CD4-positive, alpha-beta T cell (primary cell): ENCODE measurements at regions of chr1 and their contacts with region 1.

Region 1: GRCh38 chr1:233295237-233295974 is at the start of gene PCNX2:
- DNase-seq: peak; percentile 28 to 87 (median 62)
- ATAC-seq: peak; percentile 79
- H3K4me3 ChIP-seq: peak within 1 kb of the TSS; percentile 65
- H3K4me3 Mint-ChIP-seq: peak within 1 kb of the TSS; percentile 89
- H3K27ac ChIP-seq: peak within 1 kb of the TSS; percentile 36 to 60
- H3K27ac Mint-ChIP-seq: peak within 1 kb of the TSS; percentile 79
- H3K4me1 ChIP-seq: peaks cover 12% of the 10 kb centered on the region
- H3K4me1 Mint-ChIP-seq: peaks cover 36% of the 10 kb centered on the region
- H3K27me3 ChIP-seq: no peaks in the 10 kb centered on the region
- H3K27me3 Mint-ChIP-seq: no peaks in the 10 kb centered on the region
- CTCF ChIP-seq: no peak
- total RNA-seq, gene PCNX2: 46.4 to 49.4 TPM

Region 2: GRCh38 chr1:233281711-233282581 is 13.5 kb before region 1 on chr1:
- CTCF ChIA-PET with region 1: interaction called, 5 read pairs
- POLR2A ChIA-PET with region 1: interaction called, 4 read pairs
- intact Hi-C with region 1: loop called in 1 of 2 experiments (anchors 2 kb)
- DNase-seq: peak in 8 of 14 experiments; percentile 6 to 62 (median 31)
- ATAC-seq: peak; percentile 82
- H3K4me3 ChIP-seq: no peak overlapping the region
- H3K4me3 Mint-ChIP-seq: peak overlapping the region; percentile 43
- H3K27ac ChIP-seq: peak overlapping the region in 1 of 2 donors; percentile 25
- H3K27ac Mint-ChIP-seq: peak overlapping the region; percentile 75
- H3K4me1 ChIP-seq: peaks cover 22% of the 10 kb centered on the region
- H3K4me1 Mint-ChIP-seq: peaks cover 54% of the 10 kb centered on the region
- H3K27me3 ChIP-seq: no peaks in the 10 kb centered on the region
- H3K27me3 Mint-ChIP-seq: no peaks in the 10 kb centered on the region
- CTCF ChIP-seq: no peak

Region 3: DNA sequence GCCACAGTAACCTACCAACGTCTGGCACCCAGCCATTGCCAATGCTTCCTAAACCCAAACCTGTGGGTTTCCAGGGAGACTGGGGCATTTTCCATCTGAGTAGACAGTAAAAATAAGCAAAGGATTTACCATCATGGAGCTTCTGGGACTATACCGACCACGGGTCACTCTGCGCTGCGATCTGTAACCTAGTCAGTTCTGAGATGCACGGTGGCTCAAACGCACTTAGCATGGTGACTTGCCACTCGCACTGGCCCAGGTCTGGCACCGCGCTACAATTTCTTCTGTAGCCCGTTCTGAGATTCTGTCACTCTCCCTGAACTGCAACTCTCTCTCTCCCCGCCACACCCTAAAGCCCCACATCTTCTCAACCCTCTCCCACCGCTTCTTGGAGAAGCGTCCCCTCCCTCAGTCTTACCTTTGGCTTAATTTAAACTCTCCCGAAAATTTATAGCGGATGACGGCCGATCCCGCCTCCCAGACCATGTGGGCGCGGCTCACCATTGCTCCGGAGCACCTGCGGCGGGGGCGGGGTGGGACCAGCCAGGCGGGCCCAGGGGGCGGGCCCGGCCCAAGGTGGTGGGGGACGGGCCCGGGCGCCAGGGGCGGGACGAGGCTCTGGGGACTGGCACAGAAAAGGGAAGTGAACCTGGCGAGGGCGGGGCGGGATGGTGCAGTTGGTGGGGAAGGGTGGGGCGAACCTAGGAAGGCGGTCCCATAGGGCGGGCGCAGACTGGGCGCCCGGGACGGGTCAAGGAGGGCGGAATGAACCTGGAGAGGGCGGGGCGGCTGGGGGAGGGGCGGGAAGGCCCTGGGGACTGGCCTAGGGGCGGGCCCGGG is 31.6 kb after region 1 on chr1:
- CTCF ChIA-PET with region 1: interaction called, 3 read pairs
- POLR2A ChIA-PET with region 1: interaction called, 8 read pairs
- intact Hi-C with region 1: loop called (anchors 2 kb)
- DNase-seq: peak; percentile 72 to 98 (median 85)
- ATAC-seq: peak; percentile 92
- H3K4me3 ChIP-seq: peak overlapping the region; percentile 49
- H3K4me3 Mint-ChIP-seq: peak overlapping the region; percentile 94
- H3K27ac ChIP-seq: peak overlapping the region in 1 of 2 donors; percentile 30
- H3K27ac Mint-ChIP-seq: peak overlapping the region; percentile 77
- H3K4me1 ChIP-seq: peaks cover 13% of the 10 kb centered on the region
- H3K4me1 Mint-ChIP-seq: peaks cover 11% of the 10 kb centered on the region
- H3K27me3 ChIP-seq: no peaks in the 10 kb centered on the region
- H3K27me3 Mint-ChIP-seq: peaks cover 3% of the 10 kb centered on the region
- CTCF ChIP-seq: no peak